Calu3 (cell line): ENCODE measurements at regions of chr4 and their contacts with region 1.

Region 1: GRCh38 chr4:119103263-119103662 is 32.4 kb upstream of the MYOZ2 start:
- DNase-seq: peak; percentile 41
- H3K4me3 Mint-ChIP-seq: peak overlapping the region; percentile 47
- H3K27ac Mint-ChIP-seq: peak overlapping the region; percentile 97
- H3K4me1 Mint-ChIP-seq: peaks cover 51% of the 10 kb centered on the region
- H3K27me3 Mint-ChIP-seq: no peaks in the 10 kb centered on the region
- CTCF ChIP-seq: no peak

Region 2: DNA sequence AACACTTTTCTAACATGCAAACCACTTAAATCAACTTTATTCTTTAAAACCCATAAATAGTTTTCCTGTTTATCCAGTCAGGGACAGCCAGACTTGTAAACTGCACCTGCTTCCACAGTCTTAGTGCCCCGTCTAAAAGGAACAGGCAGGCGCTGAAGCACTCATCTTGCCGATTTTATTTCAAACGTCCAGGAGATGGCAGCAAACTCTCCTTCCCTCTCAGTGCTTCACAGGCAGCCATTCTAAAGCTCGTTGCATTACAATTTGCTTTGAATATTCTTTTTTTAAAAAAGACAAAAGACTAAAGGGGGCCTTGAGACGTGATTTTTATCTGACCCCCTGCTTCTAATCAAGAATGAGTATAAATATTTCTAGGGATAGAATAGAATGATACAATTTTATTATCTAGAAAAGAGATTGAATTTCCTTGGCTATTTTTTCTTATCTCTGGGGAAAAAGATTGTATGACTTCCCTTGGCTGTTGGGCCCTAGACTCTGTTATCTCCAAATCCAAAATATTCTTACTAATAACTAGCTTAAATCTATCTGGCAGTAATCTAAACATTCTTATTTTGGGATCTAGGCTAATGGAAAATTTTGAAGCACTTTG is 61.2 kb before region 1 on chr4:
- CTCF ChIA-PET with region 1: no interaction called
- intact Hi-C with region 1: loop called (anchors 5 kb)
- DNase-seq: peak; percentile 47
- H3K4me3 Mint-ChIP-seq: no peak overlapping the region
- H3K27ac Mint-ChIP-seq: no peak overlapping the region
- H3K4me1 Mint-ChIP-seq: peaks cover 7% of the 10 kb centered on the region
- H3K27me3 Mint-ChIP-seq: no peaks in the 10 kb centered on the region
- CTCF ChIP-seq: peak; percentile 53

Region 3: GRCh38 chr4:119087121-119087520 is 16.1 kb before region 1 on chr4:
- CTCF ChIA-PET with region 1: interaction called, 11 read pairs
- intact Hi-C with region 1: no loop called
- DNase-seq: no peak
- H3K4me3 Mint-ChIP-seq: no peak overlapping the region
- H3K27ac Mint-ChIP-seq: peak overlapping the region; percentile 60
- H3K4me1 Mint-ChIP-seq: peaks cover 50% of the 10 kb centered on the region
- H3K27me3 Mint-ChIP-seq: no peaks in the 10 kb centered on the region
- CTCF ChIP-seq: no peak